Heart left ventricle (tissue), 16 donors: ENCODE measurements at regions of chr20 and their contacts with region 1.

Region 1: DNA sequence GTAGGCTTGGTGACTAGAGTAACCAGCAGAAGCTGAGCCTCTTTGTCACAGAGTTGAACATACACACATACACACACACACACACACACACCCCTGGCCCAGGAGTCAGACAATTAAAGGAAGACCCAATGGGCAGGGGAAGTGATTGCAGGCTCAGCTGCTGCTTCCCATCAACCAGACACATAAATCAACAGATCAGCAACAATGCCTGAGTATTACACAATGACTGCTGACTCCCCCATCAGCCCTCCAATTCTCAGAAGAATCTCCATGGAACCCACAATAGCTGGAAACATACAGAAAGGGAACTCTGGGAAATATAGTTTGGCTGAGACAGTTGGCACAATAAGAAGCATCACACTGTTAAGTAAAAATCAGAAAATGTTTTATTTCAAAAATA is 270.4 kb upstream of the PLCB4 start:
- DNase-seq: peak in 3 of 5 donors; percentile 19 to 34 (median 24)
- ATAC-seq: peak in 3 of 4 donors; percentile 53 to 63 (median 61)
- H3K4me3 ChIP-seq: no peak overlapping the region
- H3K27ac ChIP-seq: no peak overlapping the region
- H3K4me1 ChIP-seq: peaks cover 0 to 31% (median 8%) of the 10 kb centered on the region in 12 donors
- H3K27me3 ChIP-seq: no peaks in the 10 kb centered on the region
- CTCF ChIP-seq: no peak
- POLR2A ChIP-seq: no peak

Region 2: GRCh38 chr20:8837396-8837795 is 38.9 kb after region 1 on chr20:
- intact Hi-C with region 1: loop called in 1 of 10 experiments (anchors 5 kb)
- DNase-seq: no peak
- ATAC-seq: no peak
- H3K4me3 ChIP-seq: no peak overlapping the region
- H3K27ac ChIP-seq: no peak overlapping the region
- H3K4me1 ChIP-seq: no peaks in the 10 kb centered on the region
- H3K27me3 ChIP-seq: no peaks in the 10 kb centered on the region
- CTCF ChIP-seq: no peak
- POLR2A ChIP-seq: no peak

Region 3: GRCh38 chr20:9038791-9039535 is 240.5 kb after region 1 on chr20:
- intact Hi-C with region 1: no loop called
- DNase-seq: no peak
- ATAC-seq: no peak
- H3K4me3 ChIP-seq: no peak overlapping the region
- H3K27ac ChIP-seq: no peak overlapping the region
- H3K4me1 ChIP-seq: no peaks in the 10 kb centered on the region
- H3K27me3 ChIP-seq: no peaks in the 10 kb centered on the region
- CTCF ChIP-seq: no peak
- POLR2A ChIP-seq: no peak